Sciatic nerve (tissue), 2 donors: ENCODE measurements at regions of chr17 and their contacts with region 1.

Region 1: DNA sequence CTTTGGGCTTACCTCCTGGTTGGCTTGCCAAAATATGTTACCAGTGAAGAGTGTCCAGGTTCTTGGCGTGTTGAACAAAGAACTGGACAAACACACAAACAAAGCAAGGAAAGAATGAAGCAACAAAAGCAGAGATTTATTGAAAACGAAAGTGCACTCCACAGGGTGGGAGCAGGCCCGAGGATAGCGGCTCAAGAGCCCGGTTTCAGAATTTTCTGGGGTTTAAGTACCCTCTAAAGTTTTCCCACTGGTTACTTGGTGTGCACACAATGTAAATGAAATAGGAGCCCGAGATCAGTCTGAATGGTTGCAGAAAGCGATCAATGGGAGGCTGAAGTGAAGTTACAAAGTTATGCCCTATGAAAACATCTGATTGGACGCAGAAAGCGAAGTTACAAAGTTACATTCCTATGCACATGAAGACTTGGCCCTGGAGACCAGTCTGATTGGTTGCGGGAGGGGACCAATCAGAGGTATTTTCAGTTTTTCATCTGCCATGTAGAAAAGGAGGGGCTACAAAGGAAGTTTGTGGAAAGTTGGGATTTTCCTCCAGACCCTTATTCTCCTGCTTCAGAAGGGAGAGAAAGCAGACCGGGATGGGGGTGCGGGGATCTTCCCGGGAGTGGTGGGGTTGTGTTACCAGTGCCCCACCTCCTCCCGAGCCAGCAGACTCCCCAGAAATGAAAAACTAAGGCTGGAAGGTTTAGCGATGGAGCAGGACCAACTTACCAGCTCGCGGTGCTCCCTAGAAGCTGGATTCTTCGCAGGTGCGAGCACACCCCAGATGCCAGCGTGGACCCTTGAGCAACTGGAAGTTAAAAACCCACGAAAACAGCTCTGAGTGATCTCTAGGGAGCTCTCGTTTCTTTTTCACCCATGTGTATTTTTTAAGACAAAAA is at the start of gene SLFN12:
- DNase-seq: peak; percentile 60
- ATAC-seq: peak; percentile 97
- total RNA-seq, gene SLFN12: 17.2 TPM

Region 2: DNA sequence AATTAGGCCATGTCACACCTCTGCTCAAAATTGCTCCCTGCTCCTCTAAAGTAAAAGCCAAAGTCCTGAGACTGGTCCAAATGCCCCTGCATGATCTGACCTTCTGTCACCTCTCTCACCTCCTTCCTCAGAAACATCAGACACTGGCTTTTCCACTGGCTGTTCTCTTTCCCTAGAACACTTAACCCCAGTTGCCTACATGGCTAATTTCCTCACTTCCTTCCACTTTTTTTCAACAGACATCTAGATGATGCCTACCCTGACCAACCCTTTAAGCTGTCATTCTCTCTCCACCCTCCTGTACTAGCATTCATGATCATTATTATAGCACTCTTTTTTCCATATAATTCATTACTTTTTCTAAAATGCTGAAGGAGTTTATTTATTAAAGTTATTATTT is 502.1 kb before region 1 on chr17:
- intact Hi-C with region 1: loop called (anchors 10 kb)
- DNase-seq: no peak
- ATAC-seq: no peak